Natural killer cell (primary cell): ENCODE measurements at regions of chr15 and their contacts with region 1.

Region 1: DNA sequence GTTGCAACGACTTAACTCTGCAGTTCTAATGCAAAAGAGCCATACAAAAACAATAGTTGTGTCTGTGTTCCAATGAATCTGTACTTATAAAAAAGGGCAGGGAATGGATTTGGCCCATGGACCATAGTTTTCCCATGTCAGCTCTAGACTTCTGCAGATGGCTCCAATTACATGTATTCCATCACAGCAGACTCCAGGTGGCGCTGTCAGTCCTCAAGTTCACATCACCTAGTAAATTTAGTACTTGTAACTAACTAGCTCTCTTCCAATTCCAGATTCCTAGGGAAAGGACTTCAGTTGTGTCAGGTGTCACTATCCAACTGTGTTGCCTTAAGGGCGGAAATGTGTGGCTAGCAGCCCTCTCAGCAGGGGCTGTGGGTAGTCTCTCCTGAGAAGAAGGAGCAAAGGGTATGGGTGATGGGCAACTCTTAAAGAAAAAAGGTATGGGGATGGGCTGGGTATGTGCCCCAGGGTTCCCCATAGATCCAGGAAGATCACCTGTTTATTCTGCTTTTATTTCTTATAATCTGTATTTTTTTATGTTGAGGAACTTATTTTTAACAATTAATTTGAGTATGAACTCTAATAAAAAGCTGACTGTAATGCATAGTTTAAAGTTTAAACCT is 36.2 kb downstream of the BBS4 start:
- DNase-seq: peak; percentile 58 to 81
- ATAC-seq: peak; percentile 42 to 60 (median 58)
- H3K4me3 ChIP-seq: no peak overlapping the region
- H3K4me3 Mint-ChIP-seq: no peak overlapping the region
- H3K27ac ChIP-seq: no peak overlapping the region
- H3K27ac Mint-ChIP-seq: no peak overlapping the region
- H3K4me1 ChIP-seq: no peaks in the 10 kb centered on the region
- H3K4me1 Mint-ChIP-seq: no peaks in the 10 kb centered on the region
- H3K27me3 ChIP-seq: no peaks in the 10 kb centered on the region
- H3K27me3 Mint-ChIP-seq: no peaks in the 10 kb centered on the region
- CTCF ChIP-seq: peak; percentile 88

Region 2: DNA sequence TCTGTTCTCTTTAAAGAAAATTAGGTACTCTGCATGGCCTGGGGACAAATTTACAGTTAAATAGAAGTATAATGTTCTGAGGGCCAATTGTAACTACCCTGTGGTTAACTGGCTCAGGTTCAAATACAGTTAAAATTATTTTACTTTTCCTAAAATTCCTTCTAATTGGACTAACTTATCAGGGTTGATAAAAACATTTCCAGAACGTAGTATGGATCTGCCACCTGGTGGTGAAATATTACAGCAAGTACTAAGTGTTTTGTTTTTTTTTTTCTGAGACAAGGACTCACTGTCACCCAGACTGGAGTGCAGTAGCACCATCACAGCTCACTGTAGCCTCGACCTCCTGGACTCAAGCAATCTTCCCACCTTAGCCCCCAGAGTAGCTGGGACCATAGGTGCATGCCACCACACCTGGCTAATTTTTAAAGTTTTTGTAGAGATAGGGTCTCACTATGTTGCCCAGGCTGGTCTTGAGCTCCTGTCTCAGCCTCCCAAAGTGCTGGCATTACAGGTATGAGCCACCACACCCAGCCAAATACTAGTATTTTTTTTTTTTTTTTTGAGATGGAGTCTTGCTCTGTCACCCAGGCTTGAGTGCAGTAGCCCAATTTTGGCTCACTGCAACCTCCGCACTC is 359.3 kb after region 1 on chr15:
- intact Hi-C with region 1: loop called (anchors 1 kb)
- DNase-seq: peak in 1 of 2 donors; percentile 73
- ATAC-seq: peak; percentile 54 to 65 (median 60)
- H3K4me3 ChIP-seq: no peak overlapping the region
- H3K4me3 Mint-ChIP-seq: no peak overlapping the region
- H3K27ac ChIP-seq: no peak overlapping the region
- H3K27ac Mint-ChIP-seq: no peak overlapping the region
- H3K4me1 ChIP-seq: no peaks in the 10 kb centered on the region
- H3K4me1 Mint-ChIP-seq: no peaks in the 10 kb centered on the region
- H3K27me3 ChIP-seq: peaks cover 3% of the 10 kb centered on the region
- H3K27me3 Mint-ChIP-seq: peaks cover 6 to 7% of the 10 kb centered on the region in 2 donors
- CTCF ChIP-seq: peak; percentile 79